Activated T-helper 2 cell treated with anti-CD3 and anti-CD28 coated beads, Interferon-gamma antibody, Interleukin-2, Interleukin-4, amounts not matched to agents 10 μg/mL and 5 μg/mL and 100 μg/mL, durations not matched to agents 14 hours and 24 hours and 36 hours (primary cell): ENCODE measurements at regions of chr3 and their contacts with region 1.

Region 1: GRCh38 chr3:30693470-30694120 is 87.2 kb downstream of the TGFBR2 start:
- DNase-seq: no peak
- H3K4me3 Mint-ChIP-seq: no peak overlapping the region
- H3K27ac Mint-ChIP-seq: no peak overlapping the region
- H3K4me1 Mint-ChIP-seq: peaks cover 31% of the 10 kb centered on the region
- H3K27me3 Mint-ChIP-seq: no peaks in the 10 kb centered on the region

Region 2: GRCh38 chr3:30042274-30042859 is 651.2 kb before region 1 on chr3:
- intact Hi-C with region 1: loop called (anchors 1 kb)
- DNase-seq: peak; percentile 18
- H3K4me3 Mint-ChIP-seq: no peak overlapping the region
- H3K27ac Mint-ChIP-seq: no peak overlapping the region
- H3K4me1 Mint-ChIP-seq: no peaks in the 10 kb centered on the region
- H3K27me3 Mint-ChIP-seq: peaks cover 37% of the 10 kb centered on the region

Region 3: DNA sequence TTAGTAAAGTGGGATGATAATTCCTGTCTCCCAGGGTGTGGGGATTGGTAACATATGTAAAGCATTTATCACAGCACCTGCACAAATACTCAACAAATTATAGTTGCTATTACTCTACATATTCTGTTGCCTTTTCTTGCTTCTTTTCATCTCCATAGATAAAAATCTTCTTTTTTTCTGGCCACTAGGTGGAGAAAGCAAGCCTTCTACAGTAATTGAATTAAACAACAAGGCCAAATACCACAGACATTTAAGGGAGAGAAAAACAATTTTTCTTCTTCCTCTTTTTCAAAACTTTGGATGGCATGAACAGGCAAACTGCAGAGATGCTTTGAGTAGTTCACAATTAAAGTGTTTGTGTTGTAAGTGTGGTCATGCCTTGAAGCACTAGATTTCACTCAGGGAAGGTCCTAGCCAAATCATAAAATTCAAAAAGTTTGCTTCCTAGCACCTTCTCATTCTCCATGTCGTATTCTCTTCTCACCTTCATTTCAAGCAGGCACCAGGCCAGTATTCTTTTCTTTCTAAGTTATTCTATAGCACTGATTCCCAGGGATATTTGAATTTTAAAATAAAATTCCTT is 580.6 kb before region 1 on chr3:
- intact Hi-C with region 1: loop called (anchors 1 kb)
- DNase-seq: no peak
- H3K4me3 Mint-ChIP-seq: no peak overlapping the region
- H3K27ac Mint-ChIP-seq: no peak overlapping the region
- H3K4me1 Mint-ChIP-seq: peaks cover 3% of the 10 kb centered on the region
- H3K27me3 Mint-ChIP-seq: peaks cover 32% of the 10 kb centered on the region

Region 4: DNA sequence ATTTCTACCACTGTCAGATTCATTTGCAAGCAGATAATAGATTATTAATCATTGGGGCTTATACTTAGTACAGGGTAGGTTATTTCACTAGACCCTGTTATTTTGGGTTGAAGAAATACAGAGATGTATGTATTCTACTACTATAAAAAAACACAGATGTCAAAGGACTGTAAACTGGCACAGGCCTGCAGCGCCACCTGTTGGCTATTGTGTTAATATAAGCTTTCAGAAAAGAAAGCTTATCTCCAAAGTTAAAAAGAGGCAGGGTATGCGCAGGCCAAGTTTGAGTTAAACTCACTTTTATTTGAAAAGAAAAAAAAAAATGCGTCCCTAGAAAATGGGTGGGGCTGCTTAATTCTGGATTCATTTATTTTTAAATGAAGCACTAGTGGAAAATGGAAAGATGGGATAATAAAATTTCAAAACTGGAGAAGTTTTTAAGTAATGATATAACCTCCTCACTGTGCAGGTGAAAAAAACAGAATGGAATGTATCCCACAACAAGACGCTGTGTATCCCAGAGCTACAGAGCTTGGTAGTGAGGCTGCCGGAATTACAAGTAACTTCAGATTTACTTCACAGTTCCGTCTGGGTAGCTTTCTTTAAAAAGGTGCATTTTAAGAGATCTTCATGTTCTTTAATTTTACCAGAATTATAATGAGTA is 494.4 kb before region 1 on chr3:
- intact Hi-C with region 1: loop called (anchors 2 kb)
- DNase-seq: peak; percentile 26
- H3K4me3 Mint-ChIP-seq: no peak overlapping the region
- H3K27ac Mint-ChIP-seq: no peak overlapping the region
- H3K4me1 Mint-ChIP-seq: peaks cover 6% of the 10 kb centered on the region
- H3K27me3 Mint-ChIP-seq: peaks cover 7% of the 10 kb centered on the region

Region 5: GRCh38 chr3:30628901-30629590 is 64.5 kb before region 1 on chr3:
- intact Hi-C with region 1: loop called (anchors 1 kb)
- DNase-seq: no peak
- H3K4me3 Mint-ChIP-seq: peak overlapping the region; percentile 26
- H3K27ac Mint-ChIP-seq: peak overlapping the region; percentile 99
- H3K4me1 Mint-ChIP-seq: peaks cover 77% of the 10 kb centered on the region
- H3K27me3 Mint-ChIP-seq: no peaks in the 10 kb centered on the region

Region 6: GRCh38 chr3:31952205-31952604 is 1258.6 kb after region 1 on chr3:
- intact Hi-C with region 1: no loop called
- DNase-seq: no peak
- H3K4me3 Mint-ChIP-seq: no peak overlapping the region
- H3K27ac Mint-ChIP-seq: no peak overlapping the region
- H3K4me1 Mint-ChIP-seq: peaks cover 3% of the 10 kb centered on the region
- H3K27me3 Mint-ChIP-seq: peaks cover 7% of the 10 kb centered on the region